Activated CD4-positive, alpha-beta memory T cell treated with anti-CD3 and anti-CD28 coated beads for 36 hours (primary cell): ENCODE measurements at regions of chr11 and their contacts with region 1.

Region 1: DNA sequence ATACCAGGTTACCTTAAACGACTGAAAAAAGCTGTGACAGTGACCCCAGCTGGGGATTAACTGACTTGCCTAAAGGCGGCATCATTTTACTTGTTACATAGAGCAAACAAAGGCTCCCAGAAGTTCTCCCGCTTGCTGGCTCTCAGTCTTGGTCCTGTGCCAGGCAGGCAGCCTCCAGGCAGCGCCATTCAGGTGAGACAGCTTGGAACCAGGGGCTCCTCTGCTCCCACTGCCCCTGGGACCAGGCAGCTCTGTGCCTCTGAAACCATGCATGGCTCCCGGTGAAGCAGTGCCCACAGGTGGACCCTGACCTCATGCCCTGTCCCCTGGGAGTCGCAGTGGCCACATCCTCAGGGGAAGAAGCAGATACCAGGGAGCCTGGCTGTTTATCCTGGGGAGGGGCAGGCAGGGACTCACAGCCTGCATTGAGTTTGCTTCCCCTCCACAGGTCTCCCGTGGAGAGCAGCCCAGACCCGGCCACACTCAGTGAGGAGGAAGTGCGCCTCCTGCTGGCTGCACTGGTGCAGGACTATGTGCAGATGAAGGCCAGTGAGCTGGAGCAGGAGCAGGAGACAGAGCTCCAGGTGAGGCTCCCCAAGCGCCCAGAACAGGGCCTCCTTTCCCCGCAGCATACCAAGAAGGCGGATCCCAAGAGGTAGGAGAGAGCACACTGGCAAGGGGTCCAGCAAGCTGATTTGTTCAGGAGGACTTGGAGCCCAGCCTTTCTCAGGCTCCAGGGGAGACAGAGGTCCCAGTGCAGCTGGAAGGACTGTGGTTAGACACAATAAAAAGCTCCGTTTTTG is 15.6 kb upstream of the CYP2R1 start:
- DNase-seq: peak; percentile 91
- H3K4me3 Mint-ChIP-seq: no peak overlapping the region
- H3K27ac Mint-ChIP-seq: no peak overlapping the region
- H3K4me1 Mint-ChIP-seq: peaks cover 36% of the 10 kb centered on the region
- H3K27me3 Mint-ChIP-seq: no peaks in the 10 kb centered on the region

Region 2: GRCh38 chr11:14300661-14301304 is 606.8 kb before region 1 on chr11:
- CTCF ChIA-PET with region 1: interaction called, 3 read pairs
- POLR2A ChIA-PET with region 1: no interaction called
- intact Hi-C with region 1: loop called (anchors 5 kb)
- DNase-seq: peak; percentile 66
- H3K4me3 Mint-ChIP-seq: no peak overlapping the region
- H3K27ac Mint-ChIP-seq: no peak overlapping the region
- H3K4me1 Mint-ChIP-seq: peaks cover 2% of the 10 kb centered on the region
- H3K27me3 Mint-ChIP-seq: no peaks in the 10 kb centered on the region

Region 3: GRCh38 chr11:14537134-14537599 is 370.4 kb before region 1 on chr11:
- CTCF ChIA-PET with region 1: interaction called, 61 read pairs
- POLR2A ChIA-PET with region 1: no interaction called
- intact Hi-C with region 1: loop called (anchors 1 kb)
- DNase-seq: peak; percentile 42
- H3K4me3 Mint-ChIP-seq: peak overlapping the region; percentile 51
- H3K27ac Mint-ChIP-seq: peak overlapping the region; percentile 76
- H3K4me1 Mint-ChIP-seq: peaks cover 19% of the 10 kb centered on the region
- H3K27me3 Mint-ChIP-seq: no peaks in the 10 kb centered on the region

Region 4: DNA sequence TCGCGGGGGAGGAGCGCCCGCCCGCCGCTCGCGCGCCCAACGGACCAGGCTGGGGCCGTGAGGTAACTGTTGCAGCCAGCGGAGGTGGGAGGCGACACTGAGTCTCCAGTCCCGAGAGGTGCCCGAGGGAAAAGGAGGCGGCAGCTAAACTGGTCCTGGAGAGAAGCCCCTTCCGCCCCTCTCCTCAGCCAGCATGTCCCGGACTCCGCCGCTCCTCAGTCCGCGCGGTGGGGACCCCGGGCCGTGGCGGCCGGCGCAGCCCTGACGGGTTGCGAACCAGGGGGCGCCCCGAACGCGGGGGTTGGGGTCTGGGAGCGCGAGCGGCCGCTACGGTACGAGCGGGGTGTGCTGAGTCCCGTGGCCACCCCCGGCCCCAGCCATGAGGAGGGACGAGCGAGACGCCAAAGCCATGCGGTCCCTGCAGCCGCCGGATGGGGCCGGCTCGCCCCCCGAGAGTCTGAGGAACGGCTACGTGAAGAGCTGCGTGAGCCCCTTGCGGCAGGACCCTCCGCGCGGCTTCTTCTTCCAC is 263.9 kb before region 1 on chr11 and contains the start of gene PDE3B:
- CTCF ChIA-PET with region 1: interaction called, 42 read pairs
- POLR2A ChIA-PET with region 1: interaction called, 4 read pairs
- intact Hi-C with region 1: loop called (anchors 2 kb)
- DNase-seq: peak; percentile 87
- H3K4me3 Mint-ChIP-seq: peak within 1 kb of the TSS; percentile 71
- H3K27ac Mint-ChIP-seq: peak within 1 kb of the TSS; percentile 89
- H3K4me1 Mint-ChIP-seq: peaks cover 49% of the 10 kb centered on the region
- H3K27me3 Mint-ChIP-seq: no peaks in the 10 kb centered on the region
- total RNA-seq, gene PDE3B: 21.6 to 21.8 TPM

Region 5: GRCh38 chr11:14858404-14858803 is 49.2 kb before region 1 on chr11:
- CTCF ChIA-PET with region 1: interaction called, 18 read pairs
- POLR2A ChIA-PET with region 1: no interaction called
- intact Hi-C with region 1: no loop called
- DNase-seq: no peak
- H3K4me3 Mint-ChIP-seq: no peak overlapping the region
- H3K27ac Mint-ChIP-seq: no peak overlapping the region
- H3K4me1 Mint-ChIP-seq: peaks cover 12% of the 10 kb centered on the region
- H3K27me3 Mint-ChIP-seq: no peaks in the 10 kb centered on the region

Region 6: GRCh38 chr11:14974515-14975251 is 67.1 kb after region 1 on chr11:
- CTCF ChIA-PET with region 1: interaction called, 55 read pairs
- POLR2A ChIA-PET with region 1: interaction called, 3 read pairs
- intact Hi-C with region 1: loop called (anchors 2 kb)
- DNase-seq: peak; percentile 83
- H3K4me3 Mint-ChIP-seq: peak overlapping the region; percentile 62
- H3K27ac Mint-ChIP-seq: no peak overlapping the region
- H3K4me1 Mint-ChIP-seq: peaks cover 26% of the 10 kb centered on the region
- H3K27me3 Mint-ChIP-seq: peaks cover 61% of the 10 kb centered on the region

Region 7: DNA sequence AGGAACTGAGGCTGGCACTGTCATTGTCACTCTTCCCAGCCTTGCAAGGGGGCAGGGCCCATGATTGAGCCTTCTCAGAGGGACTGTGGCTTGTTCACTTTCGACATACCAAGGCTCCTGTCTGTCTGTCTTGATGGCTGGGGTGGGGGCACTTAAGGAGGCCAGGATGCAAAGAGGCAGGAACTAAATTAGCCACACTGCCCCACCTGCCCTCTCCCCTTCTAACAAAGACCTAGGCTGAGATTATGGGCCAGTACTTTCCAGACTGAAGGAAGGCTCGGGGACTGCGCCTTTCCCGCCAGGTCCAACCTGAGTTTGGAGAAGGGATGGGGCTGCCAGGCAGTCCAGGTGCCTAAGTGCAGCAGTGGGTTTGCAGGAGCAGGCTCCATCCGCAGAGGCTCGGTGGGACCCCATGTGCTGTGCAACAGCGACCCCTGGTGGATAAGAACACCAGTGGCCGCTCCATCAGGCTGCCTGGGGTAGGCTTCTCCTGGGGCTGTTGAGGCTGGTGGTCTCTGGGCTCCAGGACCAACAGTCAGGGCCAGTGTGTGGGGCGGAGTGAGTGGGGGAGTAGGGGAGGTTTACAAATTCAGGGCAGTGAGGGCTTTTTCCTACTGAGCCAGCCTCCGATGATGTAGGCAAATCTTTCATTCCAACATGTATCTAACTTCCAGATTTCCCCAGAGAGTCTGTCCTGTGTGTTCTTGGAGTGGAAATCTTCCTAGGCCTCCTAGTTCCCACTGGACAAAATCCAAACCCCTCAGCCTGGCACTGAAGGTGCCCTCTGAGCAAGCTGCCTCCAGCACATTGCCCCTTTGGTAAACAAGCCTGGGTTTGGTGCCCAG is 301.0 kb after region 1 on chr11:
- CTCF ChIA-PET with region 1: interaction called, 21 read pairs
- POLR2A ChIA-PET with region 1: no interaction called
- intact Hi-C with region 1: loop called (anchors 1 kb)
- DNase-seq: peak; percentile 79
- H3K4me3 Mint-ChIP-seq: no peak overlapping the region
- H3K27ac Mint-ChIP-seq: no peak overlapping the region
- H3K4me1 Mint-ChIP-seq: no peaks in the 10 kb centered on the region
- H3K27me3 Mint-ChIP-seq: peaks cover 2% of the 10 kb centered on the region